OCI-LY7 (cell line): ENCODE measurements at regions of chr2 and their contacts with region 1.

Region 1: GRCh38 chr2:22683914-22684313 is 701.1 kb upstream of the KLHL29 start:
- DNase-seq: no peak
- H3K4me3 ChIP-seq: no peak overlapping the region
- H3K27ac ChIP-seq: no peak overlapping the region
- H3K4me1 ChIP-seq: no peaks in the 10 kb centered on the region
- CTCF ChIP-seq: no peak

Region 2: GRCh38 chr2:22694856-22695255 is 10.9 kb after region 1 on chr2:
- CTCF ChIA-PET with region 1: no interaction called
- POLR2A ChIA-PET with region 1: interaction called, 12 read pairs
- intact Hi-C with region 1: no loop called
- DNase-seq: no peak
- H3K4me3 ChIP-seq: no peak overlapping the region
- H3K27ac ChIP-seq: no peak overlapping the region
- H3K4me1 ChIP-seq: no peaks in the 10 kb centered on the region
- CTCF ChIP-seq: no peak